Upper lobe of right lung (tissue), 1 donor: ENCODE measurements at regions of chr3 and their contacts with region 1.

Region 1: DNA sequence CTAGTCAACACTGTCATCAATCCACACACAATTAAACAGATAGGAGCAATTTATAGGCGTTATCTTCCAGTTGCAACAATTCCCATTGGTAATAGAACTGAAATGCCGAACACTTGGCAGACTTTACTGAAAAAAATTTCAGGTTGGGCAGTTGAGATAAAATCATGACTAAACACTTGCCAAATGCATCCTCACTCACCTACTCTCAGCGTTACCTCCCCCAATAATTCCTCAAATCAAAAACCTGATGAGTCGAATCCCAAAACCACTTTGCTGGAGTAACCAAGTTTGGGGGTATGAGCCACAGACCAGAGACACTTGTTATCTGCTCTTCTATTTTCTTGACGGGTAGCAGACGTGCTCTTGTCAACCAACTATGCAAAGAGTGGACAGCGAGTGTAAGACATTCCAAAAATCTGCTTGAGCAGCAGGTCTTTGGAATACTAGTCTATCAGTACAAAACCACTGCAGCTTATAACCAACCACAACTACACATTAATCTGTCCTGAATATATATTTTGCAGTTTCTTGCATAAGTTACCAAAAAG is 30.3 kb downstream of the PPP1R2 start:
- DNase-seq: no peak
- ATAC-seq: no peak
- H3K4me3 ChIP-seq: no peak overlapping the region
- H3K27ac ChIP-seq: no peak overlapping the region
- H3K4me1 ChIP-seq: no peaks in the 10 kb centered on the region
- H3K27me3 ChIP-seq: no peaks in the 10 kb centered on the region
- CTCF ChIP-seq: no peak

Region 2: DNA sequence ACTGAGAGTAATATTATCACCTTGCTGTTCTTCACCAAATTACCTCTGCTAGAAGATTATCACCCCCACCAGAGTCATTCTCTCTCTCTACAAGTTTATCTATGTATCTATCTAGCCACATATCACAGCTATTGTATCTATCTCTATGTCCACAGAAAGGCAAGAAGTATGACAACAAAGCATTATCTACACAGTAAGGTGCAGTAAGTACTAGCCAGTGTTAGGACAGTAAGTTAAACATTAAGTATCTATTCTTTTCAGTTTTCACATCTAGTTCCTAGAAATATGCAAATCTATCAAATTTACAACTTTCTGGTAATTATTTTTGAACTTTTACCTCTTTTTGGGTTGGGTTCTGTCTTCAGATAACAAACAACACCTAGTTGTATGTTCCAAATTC is 215.4 kb before region 1 on chr3:
- intact Hi-C with region 1: loop called (anchors 10 kb)
- DNase-seq: no peak
- ATAC-seq: no peak
- H3K4me3 ChIP-seq: no peak overlapping the region
- H3K27ac ChIP-seq: no peak overlapping the region
- H3K4me1 ChIP-seq: no peaks in the 10 kb centered on the region
- H3K27me3 ChIP-seq: no peaks in the 10 kb centered on the region
- CTCF ChIP-seq: no peak

Region 3: GRCh38 chr3:195450731-195451229 is 62.1 kb before region 1 on chr3:
- intact Hi-C with region 1: no loop called
- DNase-seq: peak; percentile 64
- ATAC-seq: peak; percentile 87
- H3K4me3 ChIP-seq: no peak overlapping the region
- H3K27ac ChIP-seq: peak overlapping the region; percentile 71
- H3K4me1 ChIP-seq: peaks cover 12% of the 10 kb centered on the region
- H3K27me3 ChIP-seq: no peaks in the 10 kb centered on the region
- CTCF ChIP-seq: no peak